ENCODE measurements at regions of chr13 and their contacts with region 1.

Region 1: GRCh38 chr13:26186118-26186870 is 35.8 kb downstream of the RNF6 start:
- DNase-seq: peak; percentile 67 to 94 (median 86)

Region 2: DNA sequence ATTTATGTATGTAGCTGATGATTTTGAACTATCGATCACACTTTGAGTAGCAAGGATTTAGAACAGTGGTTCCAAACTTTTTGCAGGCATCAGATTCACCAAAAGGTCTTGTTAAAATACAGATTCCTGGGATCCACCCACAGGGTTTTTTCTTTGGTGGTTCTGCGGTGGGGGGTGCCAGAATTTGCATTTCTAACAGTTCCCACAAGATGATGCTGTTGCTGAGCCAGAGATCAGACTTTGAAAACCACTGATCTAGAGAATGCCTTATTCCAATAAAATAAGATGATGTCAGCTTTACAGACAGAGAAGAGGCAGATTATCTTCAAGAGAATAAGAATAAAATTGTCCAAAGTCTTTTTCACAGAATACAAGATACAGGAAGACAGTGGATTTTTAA is 53.5 kb before region 1 on chr13:
- intact Hi-C with region 1: no loop called
- DNase-seq: peak in 31 of 42 donors; percentile 5 to 60 (median 27)

Region 3: GRCh38 chr13:26253787-26254582 is 67.7 kb after region 1 on chr13 and contains the start of gene CDK8:
- intact Hi-C with region 1: loop called (anchors 2 kb)
- DNase-seq: peak; percentile 89 to 97 (median 93)

Region 4: DNA sequence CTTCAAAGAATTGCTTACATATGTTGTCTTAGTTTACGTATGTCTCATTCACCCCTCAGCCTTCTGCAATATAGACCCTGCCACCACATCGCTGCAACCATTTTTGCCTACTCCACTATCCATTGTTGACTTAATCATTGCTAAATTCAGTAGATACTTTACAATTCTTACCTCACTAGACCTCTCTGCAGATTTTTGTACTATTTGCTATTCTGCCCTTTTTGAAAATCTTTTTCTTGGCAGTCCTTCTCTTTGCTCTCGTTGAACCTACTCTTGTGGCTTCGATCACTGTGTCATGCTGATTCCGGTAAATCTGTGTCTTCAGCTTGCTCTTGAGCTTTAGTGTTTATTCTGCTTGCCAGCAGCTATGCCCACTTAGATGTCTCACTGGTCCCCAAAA is 148.9 kb after region 1 on chr13:
- intact Hi-C with region 1: no loop called
- DNase-seq: no peak

Region 5: GRCh38 chr13:26377038-26377437 is 190.7 kb after region 1 on chr13:
- intact Hi-C with region 1: no loop called
- DNase-seq: peak in 11 of 42 donors; percentile 5 to 43 (median 11)

Region 6: GRCh38 chr13:26498656-26499591 is 312.6 kb after region 1 on chr13:
- intact Hi-C with region 1: loop called (anchors 5 kb)
- DNase-seq: no peak

Region 7: GRCh38 chr13:26698392-26699196 is 512.3 kb after region 1 on chr13:
- intact Hi-C with region 1: loop called (anchors 10 kb)
- DNase-seq: peak; percentile 60 to 96 (median 90)